ENCODE measurements at regions of chr6 and their contacts with region 1.

Region 1: GRCh38 chr6:73435236-73435635 is 16.9 kb downstream of the CGAS start:
- H3K4me3 Mint-ChIP-seq: no peak overlapping the region
- H3K27ac Mint-ChIP-seq: no peak overlapping the region
- H3K4me1 Mint-ChIP-seq: peaks cover 5% of the 10 kb centered on the region
- H3K27me3 Mint-ChIP-seq: no peaks in the 10 kb centered on the region

Region 2: DNA sequence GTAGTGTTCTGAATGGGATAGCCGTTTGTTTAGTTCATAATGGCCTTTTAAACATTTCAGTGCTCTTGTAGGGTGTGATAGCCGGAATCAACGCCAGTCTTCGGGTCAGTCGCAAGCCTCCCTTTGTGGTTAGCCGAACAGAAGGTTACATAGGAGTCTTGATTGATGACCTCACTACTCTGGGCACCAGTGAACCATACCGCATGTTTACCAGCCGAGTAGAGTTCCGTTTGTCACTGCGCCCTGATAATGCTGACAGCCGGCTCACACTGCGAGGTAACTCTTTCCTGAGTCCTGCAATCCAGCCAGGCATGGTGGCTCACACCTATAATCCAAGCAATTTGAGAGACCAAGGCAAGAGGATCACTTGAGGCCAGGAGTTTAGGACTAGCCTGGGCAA is 46.7 kb after region 1 on chr6:
- intact Hi-C with region 1: loop called (anchors 5 kb)
- H3K4me3 Mint-ChIP-seq: no peak overlapping the region
- H3K27ac Mint-ChIP-seq: no peak overlapping the region
- H3K4me1 Mint-ChIP-seq: no peaks in the 10 kb centered on the region
- H3K27me3 Mint-ChIP-seq: no peaks in the 10 kb centered on the region

Region 3: DNA sequence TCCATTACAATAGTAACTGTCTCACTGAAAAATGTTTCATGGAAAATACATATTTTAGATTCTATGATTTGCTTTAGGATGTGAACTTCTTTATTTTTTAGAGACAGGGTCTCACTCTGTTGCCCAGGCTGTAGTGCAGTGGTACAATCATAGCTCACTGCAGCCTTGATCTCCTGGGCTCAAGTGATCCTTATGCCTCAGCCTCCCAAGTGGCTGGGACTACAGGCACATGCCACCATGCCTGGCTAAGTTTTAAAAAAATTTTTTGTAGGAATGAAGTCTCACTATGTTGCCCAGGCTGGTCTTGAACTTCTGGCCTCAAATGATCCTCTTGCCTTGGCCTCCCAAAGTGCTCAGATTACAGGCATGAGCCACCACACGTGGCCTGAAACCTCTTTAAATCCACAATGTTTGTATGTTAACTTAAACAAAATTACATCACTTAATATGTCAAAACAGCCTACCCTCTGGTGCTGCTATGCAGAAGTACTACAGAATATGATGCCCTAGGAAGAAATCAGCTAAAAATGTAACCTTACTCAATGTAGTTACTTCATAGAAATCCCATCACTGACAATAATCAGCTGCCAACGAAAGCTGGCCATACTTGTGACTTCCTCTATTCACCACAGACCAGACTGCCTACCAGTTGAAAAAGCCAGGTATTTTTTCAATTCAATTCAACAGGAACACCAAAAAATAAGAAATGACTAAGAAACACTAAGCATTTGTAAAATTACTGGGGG is 68.0 kb after region 1 on chr6:
- intact Hi-C with region 1: no loop called
- H3K4me3 Mint-ChIP-seq: no peak overlapping the region
- H3K27ac Mint-ChIP-seq: peak overlapping the region; percentile 51
- H3K4me1 Mint-ChIP-seq: peaks cover 5% of the 10 kb centered on the region
- H3K27me3 Mint-ChIP-seq: no peaks in the 10 kb centered on the region

Region 4: DNA sequence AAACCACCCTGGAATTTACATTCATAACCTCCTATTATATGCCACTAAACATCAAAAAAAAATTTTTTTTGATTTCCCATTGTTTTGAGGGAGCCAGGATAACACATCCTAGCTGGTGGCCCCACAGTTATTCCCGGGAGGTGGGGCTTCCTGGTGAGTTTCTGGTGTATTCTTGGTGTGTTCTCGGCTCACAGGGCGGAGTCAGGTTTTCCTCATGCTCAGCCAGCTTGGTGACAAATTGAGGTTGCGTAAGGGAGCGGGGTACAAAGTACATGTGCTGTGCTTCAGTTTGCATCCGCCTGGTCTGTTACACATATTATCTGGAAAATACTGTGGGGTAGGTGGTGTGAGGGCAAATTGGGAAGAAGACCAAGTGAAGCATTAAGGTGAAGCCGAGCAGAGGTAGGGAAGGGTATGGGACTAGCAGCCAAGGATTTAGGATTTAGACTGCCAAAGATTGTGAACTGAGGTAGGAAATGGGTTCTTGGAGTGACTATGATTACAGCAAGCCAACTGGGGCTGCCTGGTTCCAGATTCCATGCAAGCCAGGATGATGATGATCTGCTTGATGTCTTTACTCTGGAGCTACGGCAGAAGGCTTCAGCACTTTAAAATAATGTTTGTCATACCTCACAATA is 131.8 kb after region 1 on chr6:
- intact Hi-C with region 1: no loop called
- H3K4me3 Mint-ChIP-seq: no peak overlapping the region
- H3K27ac Mint-ChIP-seq: peak overlapping the region; percentile 40
- H3K4me1 Mint-ChIP-seq: peaks cover 36% of the 10 kb centered on the region
- H3K27me3 Mint-ChIP-seq: no peaks in the 10 kb centered on the region

Measured in dendritic cell treated with granulocyte-macrophage colony-stimulating factor and Interleukin-4, amounts not matched to agents 40 ng/mL and 50 ng/mL, for 4 days (primary cell).